Caco-2 (cell line): ENCODE measurements at regions of chr7 and their contacts with region 1.

Region 1: DNA sequence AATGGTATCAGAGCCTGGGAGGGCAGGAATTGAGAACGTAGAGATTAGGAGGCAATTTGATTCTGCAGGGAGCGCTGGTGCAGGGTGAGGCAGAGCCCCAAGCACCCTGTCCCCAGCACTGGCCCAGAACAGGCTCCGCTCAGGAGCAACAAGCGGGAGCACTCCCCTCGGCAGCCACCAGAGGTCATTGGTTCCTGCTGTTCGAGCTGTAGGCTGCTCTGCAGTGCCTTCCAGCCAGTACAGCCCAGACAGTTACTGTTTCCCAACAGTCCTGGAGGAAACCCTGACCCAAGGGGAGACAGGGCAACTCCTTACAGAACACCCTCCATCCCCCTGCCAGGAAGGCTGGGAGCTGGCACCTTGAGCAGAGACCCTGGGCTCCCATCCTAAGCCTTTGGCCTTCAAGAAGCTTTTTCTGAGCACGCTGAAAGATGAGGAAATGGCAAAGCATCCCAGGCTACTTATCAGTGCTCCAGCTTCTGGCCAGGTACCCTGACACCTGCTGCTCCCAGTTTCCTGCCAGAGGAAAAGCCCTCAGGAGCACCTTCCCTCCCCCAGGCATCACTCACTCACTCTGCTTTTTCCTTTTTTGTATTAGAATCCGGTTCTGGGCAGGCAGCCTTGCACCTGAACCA is 71.2 kb upstream of the EFCAB10 start:
- DNase-seq: peak; percentile 81 to 87
- H3K4me3 ChIP-seq: no peak overlapping the region
- H3K4me3 Mint-ChIP-seq: no peak overlapping the region
- H3K27ac Mint-ChIP-seq: no peak overlapping the region
- H3K4me1 ChIP-seq: peaks cover 20% of the 10 kb centered on the region
- H3K4me1 Mint-ChIP-seq: peaks cover 27% of the 10 kb centered on the region
- H3K27me3 ChIP-seq: no peaks in the 10 kb centered on the region
- H3K27me3 Mint-ChIP-seq: no peaks in the 10 kb centered on the region
- CTCF ChIP-seq: peak; percentile 91 to 93

Region 2: GRCh38 chr7:105734233-105734632 is 81.8 kb after region 1 on chr7:
- CTCF ChIA-PET with region 1: no interaction called
- POLR2A ChIA-PET with region 1: no interaction called
- intact Hi-C with region 1: loop called (anchors 1 kb)
- DNase-seq: peak in 1 of 2 experiments; percentile 42
- H3K4me3 ChIP-seq: no peak overlapping the region
- H3K4me3 Mint-ChIP-seq: no peak overlapping the region
- H3K27ac Mint-ChIP-seq: no peak overlapping the region
- H3K4me1 ChIP-seq: 0 out of 2 replicates have a peak, but pooled peaks cover 3% of the 10 kb centered on the region
- H3K4me1 Mint-ChIP-seq: peaks cover 12% of the 10 kb centered on the region
- H3K27me3 ChIP-seq: no peaks in the 10 kb centered on the region
- H3K27me3 Mint-ChIP-seq: no peaks in the 10 kb centered on the region
- CTCF ChIP-seq: no peak

Region 3: DNA sequence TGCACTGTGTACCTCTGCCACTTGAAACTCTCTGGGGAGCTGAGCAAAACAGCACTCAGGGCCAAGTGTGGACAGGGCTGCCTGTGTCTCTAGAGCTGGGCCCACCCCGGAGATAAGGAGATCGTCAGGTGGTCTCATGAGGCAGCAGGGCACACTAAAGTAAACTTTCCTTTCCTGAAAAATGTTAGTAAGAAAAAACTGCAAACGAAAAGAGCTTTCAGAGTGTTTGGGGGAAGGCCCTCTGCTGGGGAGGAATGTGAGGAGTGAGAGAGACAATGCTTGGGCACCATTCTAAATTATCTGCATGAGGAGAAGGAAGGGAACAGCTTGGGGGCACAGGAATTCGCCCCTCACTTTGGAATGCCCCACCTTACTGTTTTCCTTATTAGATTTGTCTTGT is 96.2 kb after region 1 on chr7:
- CTCF ChIA-PET with region 1: interaction called, 4 read pairs
- POLR2A ChIA-PET with region 1: no interaction called
- intact Hi-C with region 1: loop called (anchors 5 kb)
- DNase-seq: no peak
- H3K4me3 ChIP-seq: no peak overlapping the region
- H3K4me3 Mint-ChIP-seq: no peak overlapping the region
- H3K27ac Mint-ChIP-seq: no peak overlapping the region
- H3K4me1 ChIP-seq: no peaks in the 10 kb centered on the region
- H3K4me1 Mint-ChIP-seq: no peaks in the 10 kb centered on the region
- H3K27me3 ChIP-seq: no peaks in the 10 kb centered on the region
- H3K27me3 Mint-ChIP-seq: no peaks in the 10 kb centered on the region
- CTCF ChIP-seq: no peak

Region 4: GRCh38 chr7:105876091-105876963 is 223.9 kb after region 1 on chr7 and contains the start of gene ATXN7L1:
- CTCF ChIA-PET with region 1: interaction called, 4 read pairs
- POLR2A ChIA-PET with region 1: no interaction called
- intact Hi-C with region 1: loop called (anchors 1 kb)
- DNase-seq: peak; percentile 97
- H3K4me3 ChIP-seq: peak within 1 kb of the TSS; percentile 95
- H3K4me3 Mint-ChIP-seq: peak within 1 kb of the TSS; percentile 97
- H3K27ac Mint-ChIP-seq: peak within 1 kb of the TSS; percentile 99
- H3K4me1 ChIP-seq: peaks cover 9% of the 10 kb centered on the region; the same call in 1 of the 2 replicates
- H3K4me1 Mint-ChIP-seq: peaks cover 15% of the 10 kb centered on the region
- H3K27me3 ChIP-seq: no peaks in the 10 kb centered on the region
- H3K27me3 Mint-ChIP-seq: no peaks in the 10 kb centered on the region
- CTCF ChIP-seq: peak; percentile 9 to 63
- total RNA-seq, gene ATXN7L1: 14.1 and 18.2 TPM in 2 replicates

Region 5: DNA sequence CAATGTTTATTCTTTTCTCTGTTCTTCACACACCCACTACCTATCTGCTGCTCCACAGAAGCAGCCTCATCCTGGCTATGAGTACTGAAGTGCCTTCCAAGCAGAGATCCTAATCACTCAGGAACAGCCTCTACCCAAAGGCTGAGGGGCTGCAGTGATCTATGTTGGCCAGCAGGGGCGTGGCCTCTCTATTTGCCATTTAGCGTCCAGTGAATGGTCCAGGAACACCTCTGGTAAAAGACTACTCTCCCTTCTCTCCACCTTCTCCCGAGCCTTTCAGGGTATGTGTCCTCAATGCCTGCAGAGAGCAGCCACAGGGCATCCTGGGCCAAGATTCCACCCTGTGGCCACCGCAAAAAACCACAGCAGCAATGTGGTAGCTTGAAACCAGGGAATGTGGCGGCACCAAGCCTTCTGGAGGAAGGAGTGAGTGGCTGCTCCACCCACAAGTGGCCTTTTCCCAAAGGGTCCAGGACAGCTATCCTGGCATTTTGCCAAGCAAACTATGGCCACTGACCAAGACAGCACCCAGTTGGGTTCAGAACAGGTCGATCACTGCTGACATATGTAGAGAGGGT is 388.8 kb after region 1 on chr7:
- CTCF ChIA-PET with region 1: interaction called, 4 read pairs
- POLR2A ChIA-PET with region 1: no interaction called
- intact Hi-C with region 1: loop called (anchors 1 kb)
- DNase-seq: peak; percentile 56 to 61
- H3K4me3 ChIP-seq: no peak overlapping the region
- H3K4me3 Mint-ChIP-seq: no peak overlapping the region
- H3K27ac Mint-ChIP-seq: no peak overlapping the region
- H3K4me1 ChIP-seq: no peaks in the 10 kb centered on the region
- H3K4me1 Mint-ChIP-seq: peaks cover 6% of the 10 kb centered on the region
- H3K27me3 ChIP-seq: no peaks in the 10 kb centered on the region
- H3K27me3 Mint-ChIP-seq: peaks cover 9% of the 10 kb centered on the region
- CTCF ChIP-seq: peak; percentile 79 to 87

Region 6: GRCh38 chr7:106166655-106167342 is 514.3 kb after region 1 on chr7:
- CTCF ChIA-PET with region 1: no interaction called
- POLR2A ChIA-PET with region 1: no interaction called
- intact Hi-C with region 1: loop called (anchors 2 kb)
- DNase-seq: peak in 1 of 2 experiments; percentile 74
- H3K4me3 ChIP-seq: no peak overlapping the region
- H3K4me3 Mint-ChIP-seq: no peak overlapping the region
- H3K27ac Mint-ChIP-seq: no peak overlapping the region
- H3K4me1 ChIP-seq: no peaks in the 10 kb centered on the region
- H3K4me1 Mint-ChIP-seq: no peaks in the 10 kb centered on the region
- H3K27me3 ChIP-seq: no peaks in the 10 kb centered on the region
- H3K27me3 Mint-ChIP-seq: peaks cover 4% of the 10 kb centered on the region
- CTCF ChIP-seq: peak; percentile 74 to 76